Activated T-helper 2 cell treated with anti-CD3 and anti-CD28 coated beads, Interferon-gamma antibody, Interleukin-2, Interleukin-4, amounts not matched to agents 10 μg/mL and 5 μg/mL and 100 μg/mL, durations not matched to agents 14 hours and 24 hours and 36 hours (primary cell): ENCODE measurements at regions of chr5 and their contacts with region 1.

Region 1: GRCh38 chr5:119328753-119329602 is 26.8 kb upstream of the TNFAIP8 start:
- DNase-seq: peak; percentile 50
- H3K4me3 Mint-ChIP-seq: peak overlapping the region; percentile 52
- H3K27ac Mint-ChIP-seq: peak overlapping the region; percentile 86
- H3K4me1 Mint-ChIP-seq: peaks cover 83% of the 10 kb centered on the region
- H3K27me3 Mint-ChIP-seq: no peaks in the 10 kb centered on the region

Region 2: GRCh38 chr5:118580949-118581348 is 748.0 kb before region 1 on chr5:
- intact Hi-C with region 1: no loop called
- DNase-seq: no peak
- H3K4me3 Mint-ChIP-seq: no peak overlapping the region
- H3K27ac Mint-ChIP-seq: no peak overlapping the region
- H3K4me1 Mint-ChIP-seq: no peaks in the 10 kb centered on the region
- H3K27me3 Mint-ChIP-seq: no peaks in the 10 kb centered on the region

Region 3: DNA sequence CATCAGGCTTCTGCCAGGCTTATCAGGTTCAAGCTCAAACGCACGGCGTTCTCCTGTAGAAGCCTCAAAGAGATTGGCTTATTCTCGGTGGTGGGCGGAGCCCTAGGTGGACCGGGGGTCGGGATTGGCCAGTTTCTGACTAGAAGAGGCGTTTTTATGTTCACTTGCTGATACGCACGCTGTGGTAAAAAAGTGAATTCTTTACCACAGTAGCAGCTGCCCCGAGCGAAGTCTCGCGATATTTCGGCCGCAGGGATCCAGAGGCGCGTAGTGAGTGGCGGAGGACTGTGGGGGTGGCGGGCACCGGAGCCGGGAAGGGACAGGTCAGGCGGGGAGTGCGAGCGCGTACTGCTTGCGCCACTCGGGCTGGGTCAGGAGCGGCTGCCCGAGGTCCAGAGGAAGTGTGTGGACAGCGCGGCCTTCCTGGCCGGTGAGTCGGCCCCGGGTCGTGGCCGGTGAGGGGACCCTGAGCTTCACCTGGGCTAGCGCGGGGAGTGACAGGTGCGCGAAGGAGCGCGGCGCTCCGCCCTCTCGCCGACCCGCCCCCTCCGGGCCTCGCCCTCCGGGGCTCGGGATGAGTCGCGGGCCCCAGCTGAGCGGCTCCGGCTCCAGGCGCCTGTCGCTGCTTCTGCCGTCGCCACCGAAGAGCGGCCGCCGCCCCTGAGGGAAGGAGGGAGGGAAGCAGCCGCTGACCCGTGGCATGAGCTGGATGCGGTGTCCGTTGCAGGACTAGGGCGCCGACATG is 258.0 kb before region 1 on chr5 and contains the start of gene DMXL1:
- intact Hi-C with region 1: loop called (anchors 2 kb)
- DNase-seq: peak; percentile 97
- H3K4me3 Mint-ChIP-seq: peak within 1 kb of the TSS; percentile 98
- H3K27ac Mint-ChIP-seq: peak within 1 kb of the TSS; percentile 99
- H3K4me1 Mint-ChIP-seq: peaks cover 33% of the 10 kb centered on the region
- H3K27me3 Mint-ChIP-seq: no peaks in the 10 kb centered on the region
- total RNA-seq, gene DMXL1: 26.7 and 29.3 TPM in 2 replicates

Region 4: GRCh38 chr5:119287547-119288073 is 41.4 kb before region 1 on chr5:
- intact Hi-C with region 1: loop called (anchors 1 kb)
- DNase-seq: peak; percentile 47
- H3K4me3 Mint-ChIP-seq: peak overlapping the region; percentile 77
- H3K27ac Mint-ChIP-seq: peak overlapping the region; percentile 97
- H3K4me1 Mint-ChIP-seq: peaks cover 91% of the 10 kb centered on the region
- H3K27me3 Mint-ChIP-seq: no peaks in the 10 kb centered on the region

Region 5: DNA sequence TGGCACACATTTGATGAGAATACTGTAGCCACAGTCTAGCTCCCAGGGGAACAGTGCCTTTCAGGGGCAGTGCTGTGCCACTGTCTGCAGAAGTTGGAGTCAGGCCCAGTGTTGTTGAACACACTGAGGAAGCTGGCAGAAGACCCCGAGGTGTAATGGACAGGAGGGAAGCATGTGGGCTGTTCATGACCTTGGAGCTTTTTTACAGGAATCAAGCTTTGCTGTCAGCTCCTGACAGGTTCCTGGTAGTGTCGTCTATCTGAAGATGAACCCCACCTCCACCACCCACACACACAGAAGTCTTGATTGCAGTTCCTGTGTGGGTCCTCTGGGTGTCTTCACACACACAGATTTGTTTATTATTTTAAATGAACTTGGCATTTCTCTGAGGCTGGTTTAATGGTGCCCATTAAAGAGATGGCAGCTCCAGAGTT is 13.4 kb before region 1 on chr5:
- intact Hi-C with region 1: loop called (anchors 1 kb)
- DNase-seq: no peak
- H3K4me3 Mint-ChIP-seq: no peak overlapping the region
- H3K27ac Mint-ChIP-seq: peak overlapping the region; percentile 77
- H3K4me1 Mint-ChIP-seq: peaks cover 84% of the 10 kb centered on the region
- H3K27me3 Mint-ChIP-seq: no peaks in the 10 kb centered on the region

Region 6: DNA sequence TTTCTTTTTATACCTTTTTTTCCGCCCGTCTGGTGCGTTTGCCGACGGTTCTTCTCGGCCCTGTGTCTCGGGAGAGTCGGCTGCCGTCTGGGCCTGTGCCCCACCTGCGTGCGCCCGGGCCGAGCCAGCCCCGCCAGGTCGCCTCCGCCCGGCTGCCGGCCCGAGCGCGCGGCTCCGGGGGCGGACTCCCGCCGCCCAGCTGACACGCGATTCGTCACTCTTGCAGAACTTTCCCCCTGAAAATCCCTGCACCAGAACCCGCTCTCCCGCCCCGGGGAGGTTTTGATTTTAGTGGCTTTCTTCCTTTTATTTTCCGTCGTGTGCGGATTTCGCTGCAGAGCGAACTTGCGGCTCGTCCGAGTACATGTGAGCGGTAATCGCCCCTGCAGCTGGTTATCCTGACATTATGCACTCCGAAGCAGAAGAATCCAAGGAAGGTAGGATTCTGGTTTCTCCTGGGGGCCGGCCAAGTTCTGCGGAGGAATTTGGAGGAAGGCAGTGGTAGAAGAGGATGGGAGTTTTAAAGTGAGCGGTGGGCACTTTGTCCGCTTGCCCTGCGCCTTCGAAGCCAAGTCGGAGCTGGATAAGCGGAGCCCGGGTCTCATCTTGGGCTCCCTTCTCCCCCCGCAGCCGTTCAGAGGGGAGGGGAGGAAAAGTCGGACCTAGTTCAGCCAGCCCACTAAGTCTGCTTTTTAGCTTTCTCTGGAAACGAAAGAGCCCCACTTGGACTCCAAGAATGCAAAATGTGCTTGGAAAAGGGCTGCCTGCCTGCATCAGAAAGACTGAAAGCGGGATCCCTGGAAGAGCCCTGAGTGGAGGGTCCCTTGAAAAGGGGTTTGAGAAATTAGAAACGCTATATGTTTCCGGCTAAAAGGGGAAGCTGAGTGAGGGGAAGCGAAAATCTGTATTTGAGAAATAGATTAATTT is 27.0 kb after region 1 on chr5 and contains the start of gene TNFAIP8:
- intact Hi-C with region 1: loop called (anchors 2 kb)
- DNase-seq: peak; percentile 46
- H3K4me3 Mint-ChIP-seq: peak within 1 kb of the TSS; percentile 99
- H3K27ac Mint-ChIP-seq: peak within 1 kb of the TSS; percentile 93
- H3K4me1 Mint-ChIP-seq: peaks cover 76% of the 10 kb centered on the region
- H3K27me3 Mint-ChIP-seq: no peaks in the 10 kb centered on the region
- total RNA-seq, gene TNFAIP8: 112 and 117 TPM in 2 replicates

Region 7: DNA sequence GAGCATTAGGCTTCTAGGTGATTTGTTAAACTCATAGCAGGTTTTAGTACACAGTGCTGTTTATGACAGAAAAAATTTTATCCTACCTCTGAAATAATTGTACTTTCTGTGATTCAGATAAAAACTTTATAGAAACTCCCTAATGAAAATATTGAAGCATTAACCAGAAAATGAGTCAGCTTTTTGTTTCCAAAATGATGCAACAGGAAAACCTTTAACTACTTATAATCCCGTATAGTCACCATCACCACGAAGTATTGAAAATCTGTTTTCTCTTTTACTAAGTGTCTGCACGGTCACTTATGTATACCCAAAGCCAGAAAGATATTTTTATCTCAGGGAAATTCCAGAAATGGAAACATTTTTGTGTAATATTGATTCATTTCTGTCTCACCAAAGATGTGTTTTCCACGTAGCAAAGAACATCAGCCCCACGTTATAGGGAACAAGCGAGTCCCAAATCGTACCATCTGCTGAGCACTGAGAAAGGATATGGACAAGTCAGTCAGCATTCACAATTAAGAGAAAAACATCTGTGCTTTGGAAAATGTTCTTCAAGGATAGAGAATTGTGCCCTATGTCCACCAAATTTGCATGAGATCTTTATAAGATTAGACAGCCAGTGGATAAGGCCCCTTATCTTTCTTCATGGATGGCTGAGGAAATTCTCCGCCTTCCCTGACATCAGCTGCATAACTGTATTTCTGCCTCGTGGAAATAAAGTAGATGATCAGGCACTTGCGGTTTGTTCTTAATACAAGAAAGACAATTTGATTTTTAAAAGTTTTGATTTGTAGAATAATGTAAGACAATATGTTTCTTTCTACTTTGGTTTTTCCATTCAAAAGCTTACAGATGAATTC is 68.8 kb after region 1 on chr5:
- intact Hi-C with region 1: loop called (anchors 1 kb)
- DNase-seq: no peak
- H3K4me3 Mint-ChIP-seq: peak overlapping the region; percentile 17
- H3K27ac Mint-ChIP-seq: peak overlapping the region; percentile 87
- H3K4me1 Mint-ChIP-seq: peaks cover 59% of the 10 kb centered on the region
- H3K27me3 Mint-ChIP-seq: no peaks in the 10 kb centered on the region

Region 8: DNA sequence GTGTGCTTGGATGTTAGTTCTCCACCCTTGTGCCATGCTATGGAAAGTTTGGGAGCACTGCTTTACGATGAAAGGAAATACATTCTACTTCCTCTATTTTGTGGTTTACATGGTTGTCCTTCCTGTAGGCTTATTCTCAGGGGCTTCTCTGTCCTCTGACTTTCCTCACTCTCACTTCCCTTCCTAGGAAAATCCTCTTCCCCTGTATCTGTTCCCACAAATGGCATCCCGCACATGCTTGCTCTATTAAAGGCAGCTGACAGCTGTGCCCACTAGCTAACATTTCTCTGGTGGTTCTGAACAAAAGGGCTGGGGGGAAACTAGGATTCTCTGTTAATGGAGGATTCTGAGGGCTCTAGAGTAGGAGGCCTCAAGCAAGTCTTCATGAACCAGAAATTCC is 352.8 kb after region 1 on chr5:
- intact Hi-C with region 1: no loop called
- DNase-seq: no peak
- H3K4me3 Mint-ChIP-seq: no peak overlapping the region
- H3K27ac Mint-ChIP-seq: no peak overlapping the region
- H3K4me1 Mint-ChIP-seq: no peaks in the 10 kb centered on the region
- H3K27me3 Mint-ChIP-seq: no peaks in the 10 kb centered on the region